Cardiac septum (tissue), 1 donor: ENCODE measurements at regions of chr3 and their contacts with region 1.

Region 1: DNA sequence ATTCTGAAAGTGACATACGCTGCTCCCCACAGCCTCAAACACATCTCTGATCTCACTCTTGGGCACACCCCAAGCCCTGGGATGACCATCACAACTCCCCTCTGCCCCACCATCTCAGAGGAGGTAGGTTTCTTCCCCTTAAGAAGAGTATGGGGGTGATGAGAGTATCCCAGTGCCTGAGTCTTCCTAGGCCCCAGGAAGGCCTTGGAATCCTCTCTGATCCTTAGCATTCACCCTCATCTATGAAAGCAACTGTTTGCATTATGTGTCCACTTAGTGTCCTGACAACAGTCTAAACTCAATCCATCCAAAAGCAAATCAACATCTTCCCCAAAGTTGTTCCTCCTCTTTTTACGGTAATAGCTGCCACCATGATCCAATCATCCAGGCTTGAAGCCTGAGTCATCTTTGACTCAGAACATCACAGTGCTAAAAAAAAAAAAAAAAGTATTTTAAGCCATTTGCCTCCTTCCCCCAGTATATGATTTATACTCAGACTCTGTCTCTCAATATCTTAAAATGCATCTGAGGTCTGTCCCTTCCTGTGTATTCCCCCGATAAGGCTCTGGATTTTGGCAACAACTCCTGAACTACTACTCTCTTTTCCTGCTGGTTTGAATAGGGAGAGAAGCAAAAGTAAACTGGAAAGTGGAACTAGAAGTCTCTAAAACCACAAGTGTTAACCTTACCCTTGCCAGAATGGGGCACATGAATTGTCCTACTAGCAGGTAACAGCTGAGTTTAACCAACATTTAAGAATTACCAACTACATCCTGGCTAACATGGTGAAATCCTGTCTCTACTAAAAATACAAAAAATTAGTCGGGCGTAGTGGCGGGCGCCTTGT is 22.5 kb downstream of the POPDC2 start:
- DNase-seq: no peak

Region 2: GRCh38 chr3:119579366-119580165 is 58.3 kb before region 1 on chr3 and contains the start of gene ADPRH:
- intact Hi-C with region 1: loop called (anchors 10 kb)
- DNase-seq: peak; percentile 92
- total RNA-seq, gene ADPRH: 10.9 TPM

Region 3: DNA sequence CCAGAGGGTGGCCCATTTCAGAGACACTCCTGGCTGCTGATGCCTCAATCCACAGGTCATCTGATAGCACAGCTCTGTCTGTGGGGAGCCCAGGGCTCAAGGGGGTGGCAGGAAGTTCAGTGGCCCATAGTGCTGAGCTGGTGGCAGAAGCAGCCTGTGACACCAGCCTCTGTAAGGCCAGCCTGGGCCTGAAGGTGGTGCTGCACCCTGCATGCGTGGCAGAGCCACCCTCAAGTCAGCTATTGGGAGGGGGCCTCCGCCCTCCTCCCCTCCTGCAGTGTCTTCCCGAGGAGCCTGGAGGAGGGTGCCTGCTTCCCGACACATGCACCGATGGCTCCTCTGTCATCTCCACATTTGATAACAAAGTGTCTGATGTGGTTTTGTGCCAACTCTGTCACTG is 37.2 kb before region 1 on chr3:
- intact Hi-C with region 1: loop called (anchors 2 kb)
- DNase-seq: no peak

Region 4: DNA sequence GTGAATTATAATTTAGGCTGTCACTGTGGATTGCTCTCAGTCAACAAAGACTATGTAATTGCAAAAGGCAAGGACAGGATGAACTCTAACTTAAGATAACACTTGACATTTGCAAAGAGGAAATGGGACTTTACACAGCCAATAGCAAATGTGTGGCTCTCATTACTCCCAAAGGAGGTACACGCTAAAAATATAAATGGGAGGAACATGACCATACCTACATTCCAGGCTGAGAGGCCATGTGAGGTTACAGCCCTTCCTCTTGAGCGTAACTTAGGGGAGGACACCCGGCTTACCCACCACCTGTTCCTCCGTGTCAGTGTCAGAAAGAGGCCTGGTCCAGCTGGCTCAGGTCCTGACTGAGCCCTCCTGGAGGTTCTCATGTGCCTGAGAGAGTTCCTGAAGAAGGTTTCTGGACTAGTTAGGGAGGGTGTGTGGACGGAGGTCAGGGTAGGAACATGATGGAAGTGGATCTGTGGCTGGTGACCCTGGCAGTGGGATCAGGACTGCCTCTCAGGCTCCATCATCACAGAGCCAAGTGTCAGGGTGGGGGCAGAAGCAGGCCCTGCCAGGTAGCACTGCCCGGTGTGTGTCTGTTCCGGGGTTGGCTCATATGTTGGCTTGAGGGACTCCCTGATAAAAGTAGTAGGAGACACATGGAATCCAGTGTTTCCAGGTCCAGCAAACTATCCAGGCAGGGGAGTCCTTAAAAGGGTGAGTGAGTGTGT is 14.6 kb after region 1 on chr3:
- intact Hi-C with region 1: loop called (anchors 2 kb)
- DNase-seq: no peak

Region 5: DNA sequence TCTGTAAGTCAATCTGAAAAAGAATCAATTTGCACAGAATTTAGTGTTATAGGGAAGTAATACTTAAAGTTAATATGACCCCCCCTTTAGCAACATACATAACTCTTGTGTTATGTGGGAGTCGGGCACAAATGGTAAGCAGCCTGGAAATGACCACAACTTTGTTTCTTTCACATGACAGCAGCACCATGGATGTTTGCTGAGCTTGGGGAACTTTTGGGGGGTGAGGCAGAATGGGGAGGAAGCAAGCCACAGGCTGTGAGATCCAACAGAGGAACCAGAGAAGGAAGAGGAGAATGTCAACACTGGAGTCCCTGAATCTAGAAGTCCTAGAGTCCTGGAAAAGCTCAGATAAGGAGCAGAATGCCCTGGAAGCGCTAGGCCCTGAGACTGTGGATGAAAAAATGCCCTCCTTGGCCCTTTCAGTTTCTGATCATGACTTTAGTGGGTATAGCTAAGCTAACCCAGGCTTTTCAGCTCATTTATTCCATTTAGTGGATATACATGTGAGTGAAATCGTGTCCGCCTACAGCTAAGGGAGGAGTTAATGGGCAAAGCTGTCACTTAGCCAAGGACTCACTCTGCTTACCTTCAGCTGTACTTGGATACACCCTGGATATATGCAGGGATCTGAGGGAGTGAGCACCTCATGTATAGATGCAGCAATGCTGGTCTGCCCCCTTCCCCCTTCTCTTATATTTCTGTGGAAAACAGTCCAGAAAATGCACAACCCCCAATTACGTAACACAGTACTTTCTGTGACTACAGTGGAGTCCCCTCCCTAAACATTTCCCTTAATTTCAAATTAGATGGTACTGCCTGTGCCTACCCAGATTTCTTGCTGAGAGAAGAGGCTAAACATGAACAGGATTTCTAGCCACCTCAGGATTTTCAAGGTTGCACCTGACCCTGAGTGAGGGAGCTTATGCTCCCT is 104.0 kb after region 1 on chr3:
- intact Hi-C with region 1: no loop called
- DNase-seq: no peak